Activated T-helper 1 cell treated with anti-CD3 and anti-CD28 coated beads, Interleukin-12 subunit alpha, Interleukin-12 subunit beta, Interleukin-2, Interleukin-4 antibody, amounts not matched to agents 30 ng/mL and 10 ng/mL and 1 ng/mL, durations not matched to agents 14 hours and 24 hours and 36 hours (primary cell): ENCODE measurements at regions of chr17 and their contacts with region 1.

Region 1: GRCh38 chr17:65294179-65294720 is 157.1 kb downstream of the RGS9 start:
- DNase-seq: peak; percentile 27
- H3K4me3 Mint-ChIP-seq: no peak overlapping the region
- H3K27ac Mint-ChIP-seq: no peak overlapping the region
- H3K4me1 Mint-ChIP-seq: peaks cover 6% of the 10 kb centered on the region
- H3K27me3 Mint-ChIP-seq: peaks cover 13% of the 10 kb centered on the region

Region 2: DNA sequence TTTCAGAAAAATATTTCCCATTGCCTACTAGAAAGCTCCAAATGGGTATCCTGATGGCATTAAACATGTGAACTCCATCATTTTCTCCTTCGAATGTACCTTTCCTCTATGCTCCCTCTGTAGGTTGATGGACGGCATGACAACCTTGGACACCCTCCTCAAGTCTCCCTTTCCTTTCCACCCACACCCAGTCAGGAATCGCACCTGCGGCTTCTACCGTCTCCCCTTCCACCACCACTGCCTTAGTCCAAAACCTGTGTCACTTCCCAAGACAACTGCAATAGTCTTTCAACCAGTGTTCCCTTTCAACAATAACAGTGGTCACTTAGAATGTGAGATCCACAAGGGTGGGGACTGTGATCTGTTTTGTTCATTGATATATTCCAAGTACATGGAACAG is 500.3 kb after region 1 on chr17:
- intact Hi-C with region 1: loop called (anchors 10 kb)
- DNase-seq: no peak
- H3K4me3 Mint-ChIP-seq: no peak overlapping the region
- H3K27ac Mint-ChIP-seq: no peak overlapping the region
- H3K4me1 Mint-ChIP-seq: peaks cover 6% of the 10 kb centered on the region
- H3K27me3 Mint-ChIP-seq: no peaks in the 10 kb centered on the region

Region 3: GRCh38 chr17:65988081-65988850 is 694.0 kb after region 1 on chr17:
- intact Hi-C with region 1: loop called (anchors 5 kb)
- DNase-seq: no peak
- H3K4me3 Mint-ChIP-seq: no peak overlapping the region
- H3K27ac Mint-ChIP-seq: no peak overlapping the region
- H3K4me1 Mint-ChIP-seq: no peaks in the 10 kb centered on the region
- H3K27me3 Mint-ChIP-seq: peaks cover 7% of the 10 kb centered on the region

Region 4: DNA sequence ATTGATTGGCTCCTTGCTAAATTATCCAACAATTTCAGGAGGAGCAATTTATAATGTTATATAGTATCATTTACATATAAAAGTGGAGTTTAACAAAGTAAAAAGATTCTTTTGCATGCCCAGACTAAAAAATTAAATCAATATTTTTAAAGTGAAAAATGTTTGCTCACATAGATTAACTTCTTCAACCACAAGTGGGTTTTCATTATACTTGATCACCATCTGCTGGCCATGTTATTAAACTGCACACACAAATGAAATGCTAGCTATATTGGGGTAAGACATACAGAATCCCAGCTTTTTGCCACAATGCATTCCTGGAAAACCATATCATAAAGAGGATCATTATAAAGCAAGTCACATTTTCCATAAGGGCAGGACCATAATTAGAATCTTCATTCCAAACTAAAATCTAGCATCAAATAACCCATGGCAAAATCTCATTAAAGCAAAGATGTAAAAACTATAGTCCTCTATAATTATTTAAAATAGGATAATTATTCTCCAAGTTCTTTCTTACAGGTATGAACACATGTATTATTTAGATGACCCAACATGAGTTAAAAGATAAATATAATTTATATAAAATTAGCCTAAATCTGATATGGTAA is 871.4 kb after region 1 on chr17:
- intact Hi-C with region 1: loop called (anchors 1 kb)
- DNase-seq: peak; percentile 4
- H3K4me3 Mint-ChIP-seq: no peak overlapping the region
- H3K27ac Mint-ChIP-seq: no peak overlapping the region
- H3K4me1 Mint-ChIP-seq: no peaks in the 10 kb centered on the region
- H3K27me3 Mint-ChIP-seq: no peaks in the 10 kb centered on the region